K562 (cell line): ENCODE measurements at regions of chr1 and their contacts with region 1.

Region 1: GRCh38 chr1:175734642-175735041 is 8.8 kb downstream of the TNR start:
- DNase-seq: no peak
- ATAC-seq: no peak
- H3K4me3 ChIP-seq: no peak overlapping the region
- H3K27ac ChIP-seq: no peak overlapping the region
- H3K4me1 ChIP-seq: peaks cover 3 to 16% of the 10 kb centered on the region in 2 experiments; a peak in 4 of 5 replicates
- H3K27me3 ChIP-seq: no peaks in the 10 kb centered on the region; a peak in 1 of 5 replicates
- CTCF ChIP-seq: no peak
- EP300 ChIP-seq: no peak
- POLR2A ChIP-seq: no peak
- RAD21 ChIP-seq: no peak

Region 2: GRCh38 chr1:175750366-175751071 is 15.9 kb after region 1 on chr1:
- CTCF ChIA-PET with region 1: no interaction called
- POLR2A ChIA-PET with region 1: interaction called, 5 read pairs
- in situ Hi-C with region 1: no loop called
- intact Hi-C with region 1: loop called (anchors 1 kb)
- DNase-seq: no peak
- ATAC-seq: no peak
- H3K4me3 ChIP-seq: no peak overlapping the region
- H3K27ac ChIP-seq: no peak overlapping the region
- H3K4me1 ChIP-seq: no peaks in the 10 kb centered on the region
- H3K27me3 ChIP-seq: peaks cover 0 to 16% of the 10 kb centered on the region in 2 experiments; a peak in 3 of 5 replicates
- CTCF ChIP-seq: no peak
- EP300 ChIP-seq: no peak
- POLR2A ChIP-seq: no peak
- RAD21 ChIP-seq: no peak